WTC11 (cell line): ENCODE measurements at regions of chr15 and their contacts with region 1.

Region 1: DNA sequence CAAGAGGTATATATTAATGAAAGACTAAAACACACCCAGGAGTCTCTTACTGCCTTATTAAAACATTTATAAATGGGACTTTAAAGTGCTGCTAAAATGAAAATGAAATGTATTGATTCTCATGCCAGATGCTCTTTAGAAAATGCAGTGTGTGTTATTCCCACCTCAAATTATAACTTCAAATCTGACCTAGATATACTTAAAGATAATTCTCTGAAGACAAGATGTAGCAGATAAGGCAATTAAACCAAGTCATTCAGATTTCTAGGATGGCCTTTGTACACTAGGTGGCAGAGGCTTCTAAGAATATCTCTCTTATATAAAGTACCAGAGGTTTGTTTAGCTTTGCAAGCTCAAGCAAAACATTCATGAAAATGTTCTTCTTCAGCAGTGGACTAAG is 26.9 kb upstream of the GOLGA8B start:
- DNase-seq: no peak
- ATAC-seq: peak; percentile 36; the same call in 1 of the 2 replicates
- H3K4me3 Mint-ChIP-seq: no peak overlapping the region
- H3K27ac Mint-ChIP-seq: no peak overlapping the region
- H3K4me1 Mint-ChIP-seq: peaks cover 4% of the 10 kb centered on the region
- H3K27me3 Mint-ChIP-seq: no peaks in the 10 kb centered on the region; the same call in 1 of the 2 replicates
- CTCF ChIP-seq: no peak

Region 2: GRCh38 chr15:34628577-34629152 is 18.3 kb after region 1 on chr15:
- CTCF ChIA-PET with region 1: no interaction called
- POLR2A ChIA-PET with region 1: no interaction called
- DNase-seq: no peak
- ATAC-seq: no peak
- H3K4me3 Mint-ChIP-seq: no peak overlapping the region
- H3K27ac Mint-ChIP-seq: no peak overlapping the region
- H3K4me1 Mint-ChIP-seq: no peaks in the 10 kb centered on the region
- H3K27me3 Mint-ChIP-seq: peaks cover 4% of the 10 kb centered on the region; the same call in 1 of the 2 replicates
- CTCF ChIP-seq: no peak

Region 3: GRCh38 chr15:34853001-34853758 is 242.8 kb after region 1 on chr15:
- CTCF ChIA-PET with region 1: interaction called, 10 read pairs
- POLR2A ChIA-PET with region 1: no interaction called
- DNase-seq: no peak
- ATAC-seq: peak; percentile 74
- H3K4me3 Mint-ChIP-seq: no peak overlapping the region
- H3K27ac Mint-ChIP-seq: no peak overlapping the region
- H3K4me1 Mint-ChIP-seq: no peaks in the 10 kb centered on the region
- H3K27me3 Mint-ChIP-seq: no peaks in the 10 kb centered on the region
- CTCF ChIP-seq: no peak